Mammary epithelial cell (primary cell): ENCODE measurements at regions of chr18 and their contacts with region 1.

Region 1: DNA sequence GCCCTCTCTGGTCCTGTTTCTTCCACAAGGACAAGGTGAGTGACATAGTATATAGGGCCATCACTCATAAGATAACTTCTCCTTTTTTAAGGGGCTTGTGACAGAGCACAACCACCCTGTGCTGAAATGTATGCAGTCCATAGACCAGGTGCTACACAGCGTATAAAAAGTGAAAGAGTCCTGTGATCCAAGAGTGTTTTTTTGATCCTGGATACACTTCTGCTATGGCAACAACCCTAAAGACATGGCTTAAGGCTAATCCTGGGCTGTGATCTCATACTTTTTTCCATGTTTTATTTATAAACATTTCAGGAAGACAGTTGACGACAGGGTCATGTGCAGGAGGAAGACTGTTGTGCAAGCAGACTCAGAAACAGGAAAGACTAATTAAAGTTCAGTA is 400.5 kb upstream of the TCF4 start:
- DNase-seq: peak; percentile 47
- H3K4me3 ChIP-seq: no peak overlapping the region
- H3K27ac ChIP-seq: no peak overlapping the region
- H3K4me1 ChIP-seq: no peaks in the 10 kb centered on the region
- H3K27me3 ChIP-seq: no peaks in the 10 kb centered on the region
- CTCF ChIP-seq: no peak

Region 2: DNA sequence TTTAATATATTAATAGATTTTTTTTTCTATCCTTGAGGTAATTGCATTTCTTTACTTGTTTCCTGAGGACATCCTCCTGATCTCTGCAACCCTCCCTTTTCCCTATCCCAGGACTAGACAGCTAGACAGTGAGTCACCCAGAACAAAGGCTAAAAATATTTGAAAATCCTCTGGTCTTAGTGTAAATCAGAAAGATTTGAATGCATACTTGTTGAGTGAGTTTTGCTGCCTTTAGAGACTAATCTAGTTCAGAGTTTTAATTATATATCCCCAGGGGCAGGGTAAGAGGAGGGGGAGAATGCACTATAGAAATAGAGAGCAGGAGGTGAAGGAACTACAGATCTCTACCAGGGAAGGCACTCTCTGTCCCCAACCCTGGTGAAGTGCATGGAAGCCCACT is 198.2 kb before region 1 on chr18:
- CTCF ChIA-PET with region 1: no interaction called
- dilution Hi-C with region 1: no loop called
- in situ Hi-C with region 1: no loop called
- intact Hi-C with region 1: no loop called
- DNase-seq: peak; percentile 72
- H3K4me3 ChIP-seq: no peak overlapping the region
- H3K27ac ChIP-seq: no peak overlapping the region
- H3K4me1 ChIP-seq: peaks cover 17% of the 10 kb centered on the region
- H3K27me3 ChIP-seq: no peaks in the 10 kb centered on the region
- CTCF ChIP-seq: no peak

Region 3: GRCh38 chr18:56028514-56028913 is 40.0 kb after region 1 on chr18:
- CTCF ChIA-PET with region 1: no interaction called
- dilution Hi-C with region 1: no loop called
- in situ Hi-C with region 1: no loop called
- intact Hi-C with region 1: no loop called
- DNase-seq: peak; percentile 65
- H3K4me3 ChIP-seq: no peak overlapping the region
- H3K27ac ChIP-seq: no peak overlapping the region
- H3K4me1 ChIP-seq: no peaks in the 10 kb centered on the region
- H3K27me3 ChIP-seq: no peaks in the 10 kb centered on the region
- CTCF ChIP-seq: no peak

Region 4: DNA sequence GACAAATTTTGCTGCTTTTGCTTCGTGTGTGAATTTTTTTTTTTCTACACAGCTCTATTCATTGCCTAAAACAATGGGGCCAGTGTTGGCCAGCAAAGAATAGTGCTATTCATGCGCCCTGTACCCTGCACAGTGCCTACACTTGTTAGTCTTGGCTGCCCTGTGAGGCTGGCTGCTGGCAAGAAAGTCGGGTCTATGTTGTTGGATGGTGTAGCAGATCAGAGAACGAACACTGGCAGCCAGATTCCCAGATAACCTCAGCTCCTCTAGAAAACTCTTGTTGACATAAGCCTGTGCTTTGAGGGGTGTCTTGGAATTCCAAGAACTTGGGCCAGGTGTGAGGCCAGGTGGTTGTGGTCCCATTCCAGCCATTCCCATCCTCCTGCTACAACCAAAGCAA is 55.1 kb after region 1 on chr18:
- CTCF ChIA-PET with region 1: no interaction called
- dilution Hi-C with region 1: loop called (anchors 5 kb)
- in situ Hi-C with region 1: no loop called
- intact Hi-C with region 1: no loop called
- DNase-seq: peak; percentile 79
- H3K4me3 ChIP-seq: no peak overlapping the region
- H3K27ac ChIP-seq: no peak overlapping the region
- H3K4me1 ChIP-seq: no peaks in the 10 kb centered on the region
- H3K27me3 ChIP-seq: no peaks in the 10 kb centered on the region
- CTCF ChIP-seq: no peak

Region 5: DNA sequence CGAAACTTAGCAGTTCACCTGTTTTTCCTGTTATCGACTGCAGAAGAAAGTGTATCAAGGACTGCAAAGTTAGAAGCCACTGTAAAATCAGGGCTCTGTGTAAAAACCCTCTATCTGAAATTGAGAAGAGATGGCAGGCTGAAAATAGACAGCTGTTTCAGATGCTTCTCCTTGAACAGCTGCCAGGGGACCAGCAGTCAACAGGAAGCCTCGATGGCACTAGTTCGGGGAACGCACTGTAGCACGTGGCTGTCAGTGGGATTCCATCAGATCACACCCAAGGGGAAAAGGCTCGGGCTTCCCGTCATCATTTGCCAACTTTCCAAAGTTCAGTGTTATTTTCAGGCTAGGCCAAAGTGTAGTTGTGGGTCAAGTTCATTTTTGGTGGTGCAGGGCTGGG is 332.9 kb after region 1 on chr18:
- CTCF ChIA-PET with region 1: no interaction called
- dilution Hi-C with region 1: no loop called
- in situ Hi-C with region 1: no loop called
- intact Hi-C with region 1: no loop called
- DNase-seq: no peak
- H3K4me3 ChIP-seq: no peak overlapping the region
- H3K27ac ChIP-seq: no peak overlapping the region
- H3K4me1 ChIP-seq: no peaks in the 10 kb centered on the region
- H3K27me3 ChIP-seq: no peaks in the 10 kb centered on the region
- CTCF ChIP-seq: no peak